ENCODE measurements at regions of chr12 and their contacts with region 1.

Region 1: GRCh38 chr12:112198120-112198733 is 72.9 kb downstream of the TRAFD1 start:
- DNase-seq: peak; percentile 78
- H3K4me3 ChIP-seq: no peak overlapping the region
- H3K27ac ChIP-seq: no peak overlapping the region
- H3K4me1 ChIP-seq: no peaks in the 10 kb centered on the region
- H3K27me3 ChIP-seq: no peaks in the 10 kb centered on the region
- CTCF ChIP-seq: peak; percentile 71
- EP300 ChIP-seq: no peak
- RAD21 ChIP-seq: peak; percentile 71

Region 2: GRCh38 chr12:112183141-112184021 is 14.8 kb before region 1 on chr12:
- CTCF ChIA-PET with region 1: interaction called, 13 read pairs
- POLR2A ChIA-PET with region 1: interaction called, 3 read pairs
- DNase-seq: no peak
- H3K4me3 ChIP-seq: no peak overlapping the region
- H3K27ac ChIP-seq: no peak overlapping the region
- H3K4me1 ChIP-seq: no peaks in the 10 kb centered on the region
- H3K27me3 ChIP-seq: no peaks in the 10 kb centered on the region
- CTCF ChIP-seq: no peak
- EP300 ChIP-seq: no peak
- RAD21 ChIP-seq: no peak

Region 3: DNA sequence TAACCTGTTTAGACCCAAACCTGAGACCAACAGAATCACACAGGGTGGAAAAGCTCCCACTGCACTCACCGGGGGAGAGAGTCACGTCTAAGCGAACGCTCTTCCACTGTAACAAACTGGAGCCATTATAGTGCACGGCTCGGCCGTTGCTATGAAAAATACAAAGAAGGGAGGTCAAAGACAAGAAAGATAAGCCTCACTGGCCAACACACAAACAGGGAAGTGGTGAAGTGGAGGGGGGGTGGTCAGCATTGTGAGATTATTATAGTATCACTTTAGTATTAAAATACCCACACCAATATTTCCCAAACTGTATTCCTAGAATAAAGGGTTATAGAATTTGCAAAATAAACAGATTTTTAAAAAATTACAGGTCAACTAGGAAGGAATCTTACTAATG is 18.0 kb after region 1 on chr12:
- CTCF ChIA-PET with region 1: interaction called, 11 read pairs
- POLR2A ChIA-PET with region 1: no interaction called
- DNase-seq: no peak
- H3K4me3 ChIP-seq: no peak overlapping the region
- H3K27ac ChIP-seq: no peak overlapping the region
- H3K4me1 ChIP-seq: no peaks in the 10 kb centered on the region; a peak in 1 of 4 replicates
- H3K27me3 ChIP-seq: no peaks in the 10 kb centered on the region
- CTCF ChIP-seq: no peak
- EP300 ChIP-seq: no peak
- RAD21 ChIP-seq: no peak

Region 4: GRCh38 chr12:112226768-112227167 is 28.5 kb after region 1 on chr12:
- CTCF ChIA-PET with region 1: interaction called, 13 read pairs
- POLR2A ChIA-PET with region 1: no interaction called
- DNase-seq: no peak
- H3K4me3 ChIP-seq: no peak overlapping the region
- H3K27ac ChIP-seq: no peak overlapping the region
- H3K4me1 ChIP-seq: no peaks in the 10 kb centered on the region
- H3K27me3 ChIP-seq: no peaks in the 10 kb centered on the region
- CTCF ChIP-seq: no peak
- EP300 ChIP-seq: no peak
- RAD21 ChIP-seq: no peak

Region 5: GRCh38 chr12:112353389-112353788 is 155.2 kb after region 1 on chr12:
- CTCF ChIA-PET with region 1: no interaction called
- POLR2A ChIA-PET with region 1: no interaction called
- DNase-seq: no peak
- H3K4me3 ChIP-seq: no peak overlapping the region
- H3K27ac ChIP-seq: no peak overlapping the region
- H3K4me1 ChIP-seq: peaks cover 3 to 6% of the 10 kb centered on the region in 2 experiments; a peak in 2 of 4 replicates
- H3K27me3 ChIP-seq: no peaks in the 10 kb centered on the region
- CTCF ChIP-seq: no peak
- EP300 ChIP-seq: no peak
- RAD21 ChIP-seq: no peak

Region 6: GRCh38 chr12:112386726-112387125 is 188.5 kb after region 1 on chr12:
- CTCF ChIA-PET with region 1: interaction called, 82 read pairs
- POLR2A ChIA-PET with region 1: interaction called, 7 read pairs
- DNase-seq: no peak
- H3K4me3 ChIP-seq: no peak overlapping the region
- H3K27ac ChIP-seq: no peak overlapping the region; a peak in 1 of 4 replicates
- H3K4me1 ChIP-seq: no peaks in the 10 kb centered on the region; a peak in 1 of 4 replicates
- H3K27me3 ChIP-seq: no peaks in the 10 kb centered on the region
- CTCF ChIP-seq: no peak
- EP300 ChIP-seq: no peak
- RAD21 ChIP-seq: no peak

Measured in SK-N-SH (cell line).